Activated CD4-positive, alpha-beta T cell treated with anti-CD3 and anti-CD28 coated beads, Interleukin-2, amount 10 ng/mL, durations not matched to agents 24 days and 14 days (primary cell): ENCODE measurements at regions of chr6 and their contacts with region 1.

Region 1: GRCh38 chr6:30678964-30679726 is 6.3 kb upstream of the DHX16 start:
- DNase-seq: peak; percentile 97
- H3K4me3 Mint-ChIP-seq: peak overlapping the region; percentile 94
- H3K27ac Mint-ChIP-seq: peak overlapping the region; percentile 97
- H3K4me1 Mint-ChIP-seq: peaks cover 40% of the 10 kb centered on the region
- H3K27me3 Mint-ChIP-seq: no peaks in the 10 kb centered on the region

Region 2: GRCh38 chr6:30635834-30636233 is 43.3 kb before region 1 on chr6:
- intact Hi-C with region 1: no loop called
- DNase-seq: no peak
- H3K4me3 Mint-ChIP-seq: no peak overlapping the region
- H3K27ac Mint-ChIP-seq: no peak overlapping the region
- H3K4me1 Mint-ChIP-seq: peaks cover 9% of the 10 kb centered on the region
- H3K27me3 Mint-ChIP-seq: no peaks in the 10 kb centered on the region

Region 3: GRCh38 chr6:30730601-30731435 is 51.7 kb after region 1 on chr6:
- intact Hi-C with region 1: loop called (anchors 5 kb)
- DNase-seq: peak; percentile 95
- H3K4me3 Mint-ChIP-seq: peak overlapping the region; percentile 75
- H3K27ac Mint-ChIP-seq: peak overlapping the region; percentile 87
- H3K4me1 Mint-ChIP-seq: peaks cover 49% of the 10 kb centered on the region
- H3K27me3 Mint-ChIP-seq: no peaks in the 10 kb centered on the region

Region 4: GRCh38 chr6:30787954-30788353 is 108.8 kb after region 1 on chr6:
- intact Hi-C with region 1: loop called (anchors 1 kb)
- DNase-seq: peak; percentile 82
- H3K4me3 Mint-ChIP-seq: peak overlapping the region; percentile 72
- H3K27ac Mint-ChIP-seq: peak overlapping the region; percentile 94
- H3K4me1 Mint-ChIP-seq: peaks cover 55% of the 10 kb centered on the region
- H3K27me3 Mint-ChIP-seq: no peaks in the 10 kb centered on the region

Region 5: GRCh38 chr6:30877419-30878371 is 198.6 kb after region 1 on chr6:
- intact Hi-C with region 1: loop called (anchors 1 kb)
- DNase-seq: peak; percentile 92
- H3K4me3 Mint-ChIP-seq: peak overlapping the region; percentile 76
- H3K27ac Mint-ChIP-seq: peak overlapping the region; percentile 85
- H3K4me1 Mint-ChIP-seq: peaks cover 37% of the 10 kb centered on the region
- H3K27me3 Mint-ChIP-seq: peaks cover 3% of the 10 kb centered on the region